OCI-LY7 (cell line): ENCODE measurements at regions of chr12 and their contacts with region 1.

Region 1: DNA sequence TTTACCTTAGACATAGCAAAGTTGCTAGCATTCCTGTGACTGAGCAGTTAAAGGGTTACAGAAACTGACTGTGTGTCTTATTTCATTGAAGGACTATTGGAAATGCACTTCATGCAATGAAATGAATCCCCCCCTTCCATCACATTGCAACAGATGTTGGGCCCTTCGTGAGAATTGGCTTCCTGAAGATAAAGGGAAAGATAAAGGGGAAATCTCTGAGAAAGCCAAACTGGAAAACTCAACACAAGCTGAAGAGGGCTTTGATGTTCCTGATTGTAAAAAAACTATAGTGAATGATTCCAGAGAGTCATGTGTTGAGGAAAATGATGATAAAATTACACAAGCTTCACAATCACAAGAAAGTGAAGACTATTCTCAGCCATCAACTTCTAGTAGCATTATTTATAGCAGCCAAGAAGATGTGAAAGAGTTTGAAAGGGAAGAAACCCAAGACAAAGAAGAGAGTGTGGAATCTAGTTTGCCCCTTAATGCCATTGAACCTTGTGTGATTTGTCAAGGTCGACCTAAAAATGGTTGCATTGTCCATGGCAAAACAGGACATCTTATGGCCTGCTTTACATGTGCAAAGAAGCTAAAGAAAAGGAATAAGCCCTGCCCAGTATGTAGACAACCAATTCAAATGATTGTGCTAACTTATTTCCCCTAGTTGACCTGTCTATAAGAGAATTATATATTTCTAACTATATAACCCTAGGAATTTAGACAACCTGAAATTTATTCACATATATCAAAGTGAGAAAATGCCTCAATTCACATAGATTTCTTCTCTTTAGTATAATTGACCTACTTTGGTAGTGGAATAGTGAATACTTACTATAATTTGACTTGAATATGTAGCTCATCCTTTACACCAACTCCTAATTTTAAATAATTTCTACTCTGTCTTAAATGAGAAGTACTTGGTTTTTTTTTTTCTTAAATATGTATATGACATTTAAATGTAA is 31.5 kb downstream of the MDM2 start:
- DNase-seq: no peak
- H3K4me3 ChIP-seq: no peak overlapping the region
- H3K27ac ChIP-seq: no peak overlapping the region
- H3K4me1 ChIP-seq: no peaks in the 10 kb centered on the region
- CTCF ChIP-seq: no peak

Region 2: GRCh38 chr12:68521321-68521839 is 318.1 kb before region 1 on chr12:
- CTCF ChIA-PET with region 1: no interaction called
- POLR2A ChIA-PET with region 1: interaction called, 14 read pairs
- intact Hi-C with region 1: no loop called
- DNase-seq: no peak
- H3K4me3 ChIP-seq: no peak overlapping the region
- H3K27ac ChIP-seq: no peak overlapping the region
- H3K4me1 ChIP-seq: no peaks in the 10 kb centered on the region
- CTCF ChIP-seq: no peak

Region 3: GRCh38 chr12:68538726-68539614 is 300.5 kb before region 1 on chr12:
- CTCF ChIA-PET with region 1: no interaction called
- POLR2A ChIA-PET with region 1: no interaction called
- intact Hi-C with region 1: no loop called
- DNase-seq: no peak
- H3K4me3 ChIP-seq: no peak overlapping the region
- H3K27ac ChIP-seq: no peak overlapping the region
- H3K4me1 ChIP-seq: no peaks in the 10 kb centered on the region
- CTCF ChIP-seq: no peak

Region 4: GRCh38 chr12:68665016-68665569 is 174.4 kb before region 1 on chr12:
- CTCF ChIA-PET with region 1: no interaction called
- POLR2A ChIA-PET with region 1: no interaction called
- intact Hi-C with region 1: no loop called
- DNase-seq: no peak
- H3K4me3 ChIP-seq: no peak overlapping the region
- H3K27ac ChIP-seq: no peak overlapping the region
- H3K4me1 ChIP-seq: peaks cover 24% of the 10 kb centered on the region
- CTCF ChIP-seq: peak; percentile 40; the same call in 1 of the 2 replicates

Region 5: GRCh38 chr12:69123919-69124638 is 284.6 kb after region 1 on chr12:
- CTCF ChIA-PET with region 1: no interaction called
- POLR2A ChIA-PET with region 1: no interaction called
- intact Hi-C with region 1: no loop called
- DNase-seq: no peak
- H3K4me3 ChIP-seq: no peak overlapping the region
- H3K27ac ChIP-seq: no peak overlapping the region
- H3K4me1 ChIP-seq: no peaks in the 10 kb centered on the region
- CTCF ChIP-seq: no peak